H1 (cell line): ENCODE measurements at regions of chr17 and their contacts with region 1.

Region 1: DNA sequence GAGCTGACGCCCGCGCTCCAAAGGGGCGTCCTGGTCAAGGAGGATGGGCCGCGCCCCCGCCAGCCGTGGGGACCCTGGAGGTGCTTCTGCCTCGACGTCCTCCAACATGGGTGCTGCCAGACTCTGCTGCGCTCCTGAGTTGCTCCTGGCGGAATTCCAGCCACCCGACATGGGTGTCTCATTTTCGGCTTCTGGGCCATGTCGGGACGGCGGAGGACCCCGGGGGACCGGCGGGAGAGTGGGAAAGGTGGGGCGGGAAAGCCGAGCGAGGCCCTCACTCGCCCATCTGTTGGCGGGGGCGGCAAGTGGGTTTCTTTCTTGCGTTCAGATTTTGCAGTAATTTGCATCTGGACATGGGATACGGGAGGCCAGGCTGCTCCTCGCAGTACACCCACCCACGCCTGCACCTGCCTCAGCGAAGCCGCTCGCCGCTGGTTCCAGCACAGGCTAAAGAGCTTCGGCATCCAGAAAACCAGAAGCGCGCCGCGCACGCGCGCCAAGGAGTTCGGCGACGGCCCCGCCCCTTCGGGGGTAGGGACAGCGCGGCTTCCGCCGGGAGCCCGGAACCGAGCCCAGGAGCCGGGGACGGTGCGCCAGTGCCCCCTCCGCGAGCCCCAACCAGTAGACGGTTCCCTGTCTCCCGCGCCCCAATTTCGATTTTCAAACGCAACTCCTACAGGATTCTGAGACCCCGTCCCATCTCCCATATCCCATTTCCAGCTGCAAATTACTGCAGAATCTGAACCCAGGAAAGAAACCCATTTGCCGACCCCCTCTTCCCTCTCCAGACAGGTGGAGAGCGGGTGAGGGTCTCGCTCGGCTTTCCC is at the start of gene ARMC7:
- DNase-seq: peak in 1 of 2 experiments; percentile 97
- H3K4me3 ChIP-seq: peak within 1 kb of the TSS; percentile 49 to 78 (median 75)
- H3K27ac ChIP-seq: no peak within 1 kb of the TSS; the same call in 1 of the 2 replicates
- H3K4me1 ChIP-seq: peaks cover 0 to 2% (median under 1%) of the 10 kb centered on the region in 4 experiments; a peak in 3 of 7 replicates
- H3K27me3 ChIP-seq: no peaks in the 10 kb centered on the region
- CTCF ChIP-seq: no peak
- EP300 ChIP-seq: no peak
- POLR2A ChIP-seq: peak in 1 of 2 experiments; percentile 56; a peak in 2 of 3 replicates
- RAD21 ChIP-seq: no peak; a peak in 1 of 4 replicates
- total RNA-seq, gene ARMC7: 13.6 TPM in 2 replicates

Region 2: GRCh38 chr17:74569020-74570003 is 540.3 kb before region 1 on chr17:
- CTCF ChIA-PET with region 1: no interaction called
- POLR2A ChIA-PET with region 1: no interaction called
- DNase-seq: no peak
- H3K4me3 ChIP-seq: no peak overlapping the region
- H3K27ac ChIP-seq: no peak overlapping the region
- H3K4me1 ChIP-seq: peaks cover 0 to 3% (median 2%) of the 10 kb centered on the region in 4 experiments; a peak in 3 of 7 replicates
- H3K27me3 ChIP-seq: peaks cover 0 to 2% (median under 1%) of the 10 kb centered on the region in 4 experiments; a peak in 1 of 7 replicates
- CTCF ChIP-seq: no peak
- EP300 ChIP-seq: no peak
- POLR2A ChIP-seq: no peak
- RAD21 ChIP-seq: no peak

Region 3: GRCh38 chr17:75012346-75013091 is 97.1 kb before region 1 on chr17 and contains the start of gene MRPL58:
- CTCF ChIA-PET with region 1: interaction called, 10 read pairs
- POLR2A ChIA-PET with region 1: interaction called, 4 read pairs
- DNase-seq: peak; percentile 80 to 93
- H3K4me3 ChIP-seq: peak within 1 kb of the TSS; percentile 73 to 84 (median 79)
- H3K27ac ChIP-seq: peak within 1 kb of the TSS; percentile 87
- H3K4me1 ChIP-seq: peaks cover 0 to 15% (median 4%) of the 10 kb centered on the region in 4 experiments; a peak in 5 of 7 replicates
- H3K27me3 ChIP-seq: no peaks in the 10 kb centered on the region
- CTCF ChIP-seq: peak in 2 of 3 experiments; percentile 36 to 38; a peak in 3 of 4 replicates
- EP300 ChIP-seq: peak in 1 of 2 experiments; percentile 60; a peak in 1 of 3 replicates
- POLR2A ChIP-seq: peak; percentile 84 to 96
- RAD21 ChIP-seq: peak in 1 of 2 experiments; percentile 38; a peak in 3 of 4 replicates
- total RNA-seq, gene MRPL58: 48.5 and 49.1 TPM in 2 replicates

Region 4: GRCh38 chr17:75069783-75070182 is 39.8 kb before region 1 on chr17:
- CTCF ChIA-PET with region 1: interaction called, 81 read pairs
- POLR2A ChIA-PET with region 1: interaction called, 7 read pairs
- DNase-seq: no peak
- H3K4me3 ChIP-seq: no peak overlapping the region
- H3K27ac ChIP-seq: no peak overlapping the region
- H3K4me1 ChIP-seq: no peaks in the 10 kb centered on the region; a peak in 1 of 7 replicates
- H3K27me3 ChIP-seq: no peaks in the 10 kb centered on the region
- CTCF ChIP-seq: peak in 2 of 3 experiments; percentile 6 to 7; a peak in 2 of 4 replicates
- EP300 ChIP-seq: no peak
- POLR2A ChIP-seq: no peak
- RAD21 ChIP-seq: no peak

Region 5: GRCh38 chr17:75087558-75088453 is 21.8 kb before region 1 on chr17 and contains the start of gene SLC16A5:
- CTCF ChIA-PET with region 1: interaction called, 81 read pairs
- POLR2A ChIA-PET with region 1: interaction called, 32 read pairs
- DNase-seq: peak; percentile 75 to 95
- H3K4me3 ChIP-seq: peak within 1 kb of the TSS; percentile 73 to 82 (median 77)
- H3K27ac ChIP-seq: peak within 1 kb of the TSS; percentile 71
- H3K4me1 ChIP-seq: peaks cover 3 to 33% (median 26%) of the 10 kb centered on the region in 4 experiments
- H3K27me3 ChIP-seq: no peaks in the 10 kb centered on the region
- CTCF ChIP-seq: no peak
- EP300 ChIP-seq: no peak
- POLR2A ChIP-seq: peak in 1 of 2 experiments; percentile 75; a peak in 2 of 3 replicates
- RAD21 ChIP-seq: 0 out of 4 replicates have a peak, but pooled peaks of 1 of the 2 experiments have one; percentile 3
- total RNA-seq, gene SLC16A5: 16.6 and 17.1 TPM in 2 replicates

Region 6: DNA sequence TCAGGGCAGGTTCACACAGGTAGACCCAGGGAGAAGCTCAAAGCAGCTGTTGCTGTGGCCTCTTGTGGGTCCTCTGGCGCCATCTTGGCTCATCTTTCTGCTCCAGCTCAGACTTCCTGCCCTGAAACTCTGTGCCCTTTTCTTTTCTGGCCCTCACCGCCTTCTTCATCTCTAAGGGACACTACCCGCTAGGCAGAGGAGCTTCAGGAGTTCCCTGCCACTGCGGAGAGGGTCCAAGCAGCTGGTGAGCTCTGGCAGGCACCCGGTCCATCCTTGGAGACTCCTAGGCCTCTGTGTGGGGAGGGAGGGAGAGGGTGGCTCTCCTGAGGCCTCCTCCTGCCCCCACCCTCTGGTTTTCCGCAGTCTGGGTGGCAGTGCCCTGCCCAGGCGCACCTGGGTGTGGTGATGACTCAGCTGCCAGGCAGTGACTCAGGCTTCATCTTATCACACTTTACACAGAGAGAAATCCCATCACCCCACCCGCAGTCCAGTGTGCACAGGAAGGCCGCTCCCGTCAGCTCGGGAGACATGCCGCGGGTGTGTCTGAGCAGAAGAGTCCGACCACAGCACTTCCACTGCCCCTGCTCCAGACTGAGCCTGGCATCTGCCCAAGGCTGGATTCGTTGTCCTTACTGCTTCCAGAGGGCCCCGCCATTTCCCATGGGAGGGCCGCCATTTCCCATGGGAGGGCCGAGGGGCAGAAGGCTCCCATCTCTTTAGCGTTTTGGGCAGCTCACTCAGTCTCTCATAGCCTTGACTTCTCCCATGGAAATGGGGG is 14.6 kb after region 1 on chr17:
- CTCF ChIA-PET with region 1: interaction called, 239 read pairs
- POLR2A ChIA-PET with region 1: interaction called, 134 read pairs
- DNase-seq: no peak
- H3K4me3 ChIP-seq: no peak overlapping the region
- H3K27ac ChIP-seq: no peak overlapping the region; the same call in 1 of the 2 replicates
- H3K4me1 ChIP-seq: peaks cover 0 to 2% (median under 1%) of the 10 kb centered on the region in 4 experiments; a peak in 1 of 7 replicates
- H3K27me3 ChIP-seq: no peaks in the 10 kb centered on the region; a peak in 1 of 7 replicates
- CTCF ChIP-seq: no peak
- EP300 ChIP-seq: no peak
- POLR2A ChIP-seq: no peak
- RAD21 ChIP-seq: no peak

Region 7: GRCh38 chr17:75147878-75148546 is 38.4 kb after region 1 on chr17:
- CTCF ChIA-PET with region 1: interaction called, 14 read pairs
- POLR2A ChIA-PET with region 1: interaction called, 7 read pairs
- DNase-seq: no peak
- H3K4me3 ChIP-seq: no peak overlapping the region
- H3K27ac ChIP-seq: no peak overlapping the region
- H3K4me1 ChIP-seq: peaks cover 0 to 2% (median 1%) of the 10 kb centered on the region in 4 experiments; a peak in 2 of 7 replicates
- H3K27me3 ChIP-seq: no peaks in the 10 kb centered on the region
- CTCF ChIP-seq: no peak
- EP300 ChIP-seq: no peak
- POLR2A ChIP-seq: no peak
- RAD21 ChIP-seq: no peak

Region 8: GRCh38 chr17:75173526-75173925 is 63.9 kb after region 1 on chr17:
- CTCF ChIA-PET with region 1: interaction called, 14 read pairs
- POLR2A ChIA-PET with region 1: interaction called, 10 read pairs
- DNase-seq: no peak
- H3K4me3 ChIP-seq: no peak overlapping the region
- H3K27ac ChIP-seq: no peak overlapping the region; the same call in 1 of the 2 replicates
- H3K4me1 ChIP-seq: no peaks in the 10 kb centered on the region; a peak in 1 of 7 replicates
- H3K27me3 ChIP-seq: no peaks in the 10 kb centered on the region
- CTCF ChIP-seq: no peak
- EP300 ChIP-seq: no peak
- POLR2A ChIP-seq: no peak
- RAD21 ChIP-seq: no peak